Endothelial cell of umbilical vein (primary cell): ENCODE measurements at regions of chr6 and their contacts with region 1.

Region 1: GRCh38 chr6:56851541-56852259 is 103.2 kb upstream of the BEND6 start:
- DNase-seq: peak; percentile 95
- H3K4me3 ChIP-seq: peak overlapping the region; percentile 63 to 97 (median 94)
- H3K27ac ChIP-seq: peak overlapping the region; percentile 83
- H3K4me1 ChIP-seq: peaks cover 29% of the 10 kb centered on the region
- H3K27me3 ChIP-seq: no peaks in the 10 kb centered on the region
- CTCF ChIP-seq: peak; percentile 47 to 70
- POLR2A ChIP-seq: peak; percentile 78

Region 2: GRCh38 chr6:56359201-56359899 is 492.4 kb before region 1 on chr6:
- CTCF ChIA-PET with region 1: interaction called, 3 read pairs
- POLR2A ChIA-PET with region 1: no interaction called
- dilution Hi-C with region 1: no loop called
- intact Hi-C with region 1: loop called (anchors 2 kb)
- DNase-seq: peak; percentile 83
- H3K4me3 ChIP-seq: no peak overlapping the region
- H3K27ac ChIP-seq: no peak overlapping the region
- H3K4me1 ChIP-seq: peaks cover 47% of the 10 kb centered on the region
- H3K27me3 ChIP-seq: no peaks in the 10 kb centered on the region
- CTCF ChIP-seq: peak; percentile 55 to 59
- POLR2A ChIP-seq: no peak

Region 3: GRCh38 chr6:56652994-56653393 is 198.7 kb before region 1 on chr6:
- CTCF ChIA-PET with region 1: interaction called, 11 read pairs
- POLR2A ChIA-PET with region 1: no interaction called
- dilution Hi-C with region 1: no loop called
- intact Hi-C with region 1: loop called (anchors 5 kb)
- DNase-seq: peak; percentile 86
- H3K4me3 ChIP-seq: no peak overlapping the region
- H3K27ac ChIP-seq: peak overlapping the region; percentile 66
- H3K4me1 ChIP-seq: peaks cover 46% of the 10 kb centered on the region
- H3K27me3 ChIP-seq: no peaks in the 10 kb centered on the region
- CTCF ChIP-seq: no peak
- POLR2A ChIP-seq: no peak

Region 4: DNA sequence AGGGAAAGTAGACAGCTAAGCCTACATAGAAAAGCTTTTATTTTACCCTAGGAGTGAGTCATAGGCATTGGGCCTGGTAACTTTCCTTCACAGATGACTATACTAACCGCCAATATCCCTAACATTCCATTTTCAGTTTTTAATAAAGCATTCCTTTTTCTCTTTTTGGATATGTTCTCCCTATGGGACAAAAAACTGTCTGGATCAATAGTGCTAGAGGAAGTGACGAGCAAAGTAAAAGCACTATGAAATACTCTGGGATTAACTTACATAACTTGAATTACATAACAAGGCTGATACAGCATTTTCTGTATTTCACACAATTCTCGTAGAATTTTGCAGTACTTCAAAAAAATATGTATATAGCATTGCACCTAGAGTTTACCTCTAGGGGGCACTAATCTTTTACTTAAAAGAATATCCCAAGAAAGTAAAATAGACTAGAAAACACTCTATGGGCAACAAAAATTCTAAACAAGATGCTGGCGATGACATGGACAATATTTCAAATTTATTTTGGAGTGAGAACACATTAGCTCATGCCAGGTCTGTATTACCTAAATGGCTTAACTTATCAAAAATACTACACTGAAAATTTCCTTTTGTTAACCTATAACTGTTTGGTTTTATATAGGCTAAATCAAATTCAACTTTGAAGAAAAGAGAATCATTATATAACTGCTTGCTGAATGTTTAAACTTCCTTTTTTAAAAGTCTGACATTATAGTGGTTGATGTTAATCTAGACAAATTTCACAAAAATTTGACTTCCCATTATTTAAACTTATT is 142.7 kb before region 1 on chr6:
- CTCF ChIA-PET with region 1: interaction called, 70 read pairs
- POLR2A ChIA-PET with region 1: no interaction called
- dilution Hi-C with region 1: no loop called
- intact Hi-C with region 1: loop called (anchors 1 kb)
- DNase-seq: peak; percentile 73
- H3K4me3 ChIP-seq: peak overlapping the region in 1 of 3 experiments; percentile 15
- H3K27ac ChIP-seq: peak overlapping the region; percentile 69
- H3K4me1 ChIP-seq: peaks cover 30% of the 10 kb centered on the region
- H3K27me3 ChIP-seq: no peaks in the 10 kb centered on the region
- CTCF ChIP-seq: peak; percentile 30 to 40
- POLR2A ChIP-seq: no peak

Region 5: GRCh38 chr6:56757588-56757984 is 94.1 kb before region 1 on chr6:
- CTCF ChIA-PET with region 1: interaction called, 58 read pairs
- POLR2A ChIA-PET with region 1: no interaction called
- dilution Hi-C with region 1: no loop called
- intact Hi-C with region 1: loop called (anchors 2 kb)
- DNase-seq: peak; percentile 76
- H3K4me3 ChIP-seq: no peak overlapping the region
- H3K27ac ChIP-seq: no peak overlapping the region
- H3K4me1 ChIP-seq: no peaks in the 10 kb centered on the region
- H3K27me3 ChIP-seq: no peaks in the 10 kb centered on the region
- CTCF ChIP-seq: peak; percentile 36 to 45
- POLR2A ChIP-seq: no peak

Region 6: GRCh38 chr6:56868687-56869086 is 17.0 kb after region 1 on chr6:
- CTCF ChIA-PET with region 1: interaction called, 67 read pairs
- POLR2A ChIA-PET with region 1: no interaction called
- dilution Hi-C with region 1: no loop called
- intact Hi-C with region 1: loop called (anchors 1 kb)
- DNase-seq: peak; percentile 91
- H3K4me3 ChIP-seq: peak overlapping the region in 1 of 3 experiments; percentile 5
- H3K27ac ChIP-seq: peak overlapping the region; percentile 70
- H3K4me1 ChIP-seq: peaks cover 52% of the 10 kb centered on the region
- H3K27me3 ChIP-seq: no peaks in the 10 kb centered on the region
- CTCF ChIP-seq: no peak
- POLR2A ChIP-seq: no peak

Region 7: GRCh38 chr6:57262901-57263694 is 411.4 kb after region 1 on chr6:
- CTCF ChIA-PET with region 1: no interaction called
- POLR2A ChIA-PET with region 1: no interaction called
- dilution Hi-C with region 1: no loop called
- intact Hi-C with region 1: no loop called
- DNase-seq: peak; percentile 52
- H3K4me3 ChIP-seq: no peak overlapping the region
- H3K27ac ChIP-seq: no peak overlapping the region
- H3K4me1 ChIP-seq: peaks cover 26% of the 10 kb centered on the region
- H3K27me3 ChIP-seq: peaks cover under 1 to 3% of the 10 kb centered on the region in 2 experiments
- CTCF ChIP-seq: no peak
- POLR2A ChIP-seq: no peak

Region 8: DNA sequence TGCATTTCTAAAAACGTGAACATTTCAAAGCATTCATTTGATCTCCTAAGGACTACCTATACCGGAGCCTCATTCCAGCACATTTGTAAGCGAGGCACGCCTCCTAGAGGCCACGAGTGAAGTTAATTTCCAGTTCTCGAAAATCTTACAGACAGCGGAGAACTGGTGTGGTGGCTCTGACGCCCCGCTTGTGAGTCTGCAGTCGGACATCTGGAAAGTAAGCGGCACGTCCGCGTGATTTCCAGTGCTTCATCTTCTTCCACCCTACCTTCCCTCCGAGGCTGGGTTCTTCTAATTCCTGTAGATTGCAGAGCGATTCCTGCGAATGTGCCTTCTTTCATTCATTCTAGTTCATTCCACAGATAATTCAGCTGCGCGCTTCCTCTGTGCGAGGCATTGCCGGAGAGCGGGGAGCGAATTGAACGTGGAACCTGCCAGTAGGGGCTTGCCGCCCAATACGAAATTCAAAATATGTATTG is 464.9 kb after region 1 on chr6:
- CTCF ChIA-PET with region 1: interaction called, 3 read pairs
- POLR2A ChIA-PET with region 1: no interaction called
- dilution Hi-C with region 1: no loop called
- intact Hi-C with region 1: loop called (anchors 1 kb)
- DNase-seq: peak; percentile 94
- H3K4me3 ChIP-seq: peak overlapping the region; percentile 25 to 92 (median 53)
- H3K27ac ChIP-seq: peak overlapping the region; percentile 44
- H3K4me1 ChIP-seq: peaks cover 34% of the 10 kb centered on the region
- H3K27me3 ChIP-seq: no peaks in the 10 kb centered on the region
- CTCF ChIP-seq: peak; percentile 64 to 79
- POLR2A ChIP-seq: no peak